Panc1 (cell line): ENCODE measurements at regions of chr1 and their contacts with region 1.

Region 1: GRCh38 chr1:92858564-92859399 is 26.9 kb downstream of the RPL5 start:
- DNase-seq: peak; percentile 53
- ATAC-seq: peak; percentile 88
- H3K4me3 ChIP-seq: no peak overlapping the region
- H3K27ac ChIP-seq: no peak overlapping the region
- H3K4me1 ChIP-seq: peaks cover 3% of the 10 kb centered on the region; the same call in 1 of the 2 replicates
- H3K27me3 ChIP-seq: no peaks in the 10 kb centered on the region
- CTCF ChIP-seq: peak; percentile 76; the same call in 1 of the 2 replicates

Region 2: DNA sequence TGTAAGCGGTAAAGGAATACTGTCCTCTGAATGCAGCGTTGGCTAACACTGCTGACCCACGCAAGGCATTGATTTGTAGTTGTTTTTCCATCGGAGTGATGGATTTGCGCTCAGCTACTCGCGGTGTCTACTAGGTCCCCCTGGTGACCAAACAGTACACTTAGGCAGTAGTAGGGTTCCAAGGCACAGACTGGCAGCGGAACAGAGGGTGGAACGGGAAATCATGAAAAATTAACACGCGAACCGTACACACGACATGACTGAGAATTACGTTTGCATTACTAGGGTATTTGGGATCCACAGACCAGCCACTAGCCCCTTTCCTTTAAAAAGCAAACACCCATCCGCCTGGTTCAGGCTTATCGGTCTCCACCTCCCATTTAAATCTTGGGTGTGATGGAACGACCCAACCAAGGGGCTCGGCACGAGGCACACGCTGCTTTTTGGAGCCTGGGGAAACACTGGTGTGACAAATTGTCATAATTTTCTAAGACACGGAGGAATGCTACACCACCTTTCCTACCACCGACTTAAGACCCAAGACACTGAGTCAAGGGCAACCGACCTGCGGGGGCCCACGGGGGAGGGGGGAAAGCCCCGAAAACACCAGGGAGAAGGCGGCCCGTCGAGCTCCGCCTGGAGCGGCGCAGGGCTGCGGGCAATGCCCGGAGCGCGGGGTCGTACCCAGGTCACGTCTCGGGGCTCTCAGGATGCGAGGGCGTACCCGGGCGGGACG is 101.8 kb after region 1 on chr1:
- CTCF ChIA-PET with region 1: interaction called, 4 read pairs
- POLR2A ChIA-PET with region 1: interaction called, 4 read pairs
- in situ Hi-C with region 1: no loop called
- intact Hi-C with region 1: loop called (anchors 1 kb)
- DNase-seq: peak; percentile 35
- ATAC-seq: peak; percentile 84
- H3K4me3 ChIP-seq: peak overlapping the region; percentile 56 to 63
- H3K27ac ChIP-seq: 0 out of 2 replicates have a peak overlapping the region, but pooled peaks have one; percentile 17
- H3K4me1 ChIP-seq: no peaks in the 10 kb centered on the region
- H3K27me3 ChIP-seq: peaks cover 9% of the 10 kb centered on the region; the same call in 1 of the 2 replicates
- CTCF ChIP-seq: peak; percentile 71

Region 3: DNA sequence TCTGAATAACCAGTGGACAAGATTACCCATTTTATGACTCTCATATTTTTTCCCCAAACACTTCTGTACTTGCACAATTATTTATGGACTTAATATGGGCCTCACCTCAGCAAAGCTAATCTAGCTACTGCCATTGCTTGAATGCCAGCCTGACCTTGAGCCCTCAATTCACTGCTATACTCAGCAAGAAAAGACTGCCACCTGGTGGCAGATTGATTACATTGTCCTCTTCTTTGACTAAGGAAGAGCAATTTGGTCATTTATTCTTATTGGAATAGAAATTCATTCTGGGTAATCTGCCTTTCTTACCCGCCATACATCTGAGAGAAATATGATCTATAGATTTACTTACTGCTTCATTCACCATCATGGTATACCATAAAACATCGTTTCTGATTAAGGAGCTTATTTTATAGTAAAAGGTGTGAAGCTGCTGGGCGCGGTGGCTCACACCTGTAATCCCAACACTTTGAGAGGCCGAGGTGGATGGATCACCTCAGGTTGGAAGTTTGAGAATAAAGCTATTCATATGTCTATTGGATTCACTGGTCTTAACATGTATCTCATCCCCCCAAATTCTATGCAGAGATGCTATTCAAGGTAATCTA is 135.4 kb after region 1 on chr1:
- CTCF ChIA-PET with region 1: interaction called, 4 read pairs
- POLR2A ChIA-PET with region 1: no interaction called
- in situ Hi-C with region 1: no loop called
- intact Hi-C with region 1: loop called (anchors 1 kb)
- DNase-seq: peak; percentile 24
- ATAC-seq: peak; percentile 86
- H3K4me3 ChIP-seq: no peak overlapping the region
- H3K27ac ChIP-seq: no peak overlapping the region
- H3K4me1 ChIP-seq: no peaks in the 10 kb centered on the region
- H3K27me3 ChIP-seq: peaks cover 3% of the 10 kb centered on the region; the same call in 1 of the 2 replicates
- CTCF ChIP-seq: peak; percentile 76